ENCODE measurements at regions of chr22 and their contacts with region 1.

Region 1: GRCh38 chr22:25404928-25405816 is 159.3 kb upstream of the GRK3 start:
- DNase-seq: peak; percentile 73
- H3K4me3 Mint-ChIP-seq: peak overlapping the region; percentile 78
- H3K27ac Mint-ChIP-seq: peak overlapping the region; percentile 55
- H3K4me1 Mint-ChIP-seq: peaks cover 35% of the 10 kb centered on the region
- H3K27me3 Mint-ChIP-seq: peaks cover 10% of the 10 kb centered on the region
- CTCF ChIP-seq: no peak

Region 2: DNA sequence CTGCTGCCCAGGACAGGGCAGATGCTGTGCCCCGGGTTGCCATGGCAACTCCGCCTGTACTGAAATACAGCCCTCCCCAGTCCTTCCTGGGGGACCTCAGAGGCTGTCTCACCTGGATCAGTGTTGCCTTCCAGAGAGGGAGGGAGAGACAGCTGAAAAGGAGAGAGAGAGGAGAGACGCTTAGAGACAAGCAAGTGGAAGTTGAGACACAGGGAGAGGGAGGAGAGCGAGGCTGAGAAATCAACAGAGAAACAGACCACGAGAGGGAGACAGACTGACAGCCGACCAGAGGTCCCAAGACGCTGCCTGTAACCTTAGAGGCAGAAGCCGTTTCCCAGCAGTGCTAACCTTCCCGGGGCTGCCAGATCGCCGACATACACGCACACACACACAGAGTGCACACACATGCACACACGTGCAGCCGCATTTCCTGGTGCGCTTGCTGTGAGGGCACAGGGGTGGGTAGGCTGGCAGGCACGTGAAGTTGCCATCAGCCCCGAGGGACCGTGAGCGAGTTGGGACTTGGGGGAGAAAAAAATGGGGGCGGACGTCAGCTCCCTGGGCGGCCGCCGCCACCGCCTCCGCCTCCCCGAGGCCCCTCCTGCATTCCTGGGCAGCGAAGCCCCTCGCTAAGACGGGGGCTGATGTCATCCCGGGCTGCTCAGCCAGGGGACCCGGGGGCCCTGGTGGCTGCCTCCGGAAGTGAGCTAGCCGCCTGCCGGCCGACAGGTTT is 294.2 kb before region 1 on chr22:
- CTCF ChIA-PET with region 1: no interaction called
- intact Hi-C with region 1: no loop called
- DNase-seq: peak; percentile 91
- H3K4me3 Mint-ChIP-seq: peak overlapping the region; percentile 88
- H3K27ac Mint-ChIP-seq: peak overlapping the region; percentile 100
- H3K4me1 Mint-ChIP-seq: peaks cover 40% of the 10 kb centered on the region
- H3K27me3 Mint-ChIP-seq: no peaks in the 10 kb centered on the region
- CTCF ChIP-seq: peak; percentile 63

Region 3: GRCh38 chr22:25362215-25362882 is 42.8 kb before region 1 on chr22:
- CTCF ChIA-PET with region 1: no interaction called
- intact Hi-C with region 1: loop called (anchors 5 kb)
- DNase-seq: peak; percentile 84
- H3K4me3 Mint-ChIP-seq: no peak overlapping the region
- H3K27ac Mint-ChIP-seq: no peak overlapping the region
- H3K4me1 Mint-ChIP-seq: no peaks in the 10 kb centered on the region
- H3K27me3 Mint-ChIP-seq: no peaks in the 10 kb centered on the region
- CTCF ChIP-seq: peak; percentile 92

Region 4: DNA sequence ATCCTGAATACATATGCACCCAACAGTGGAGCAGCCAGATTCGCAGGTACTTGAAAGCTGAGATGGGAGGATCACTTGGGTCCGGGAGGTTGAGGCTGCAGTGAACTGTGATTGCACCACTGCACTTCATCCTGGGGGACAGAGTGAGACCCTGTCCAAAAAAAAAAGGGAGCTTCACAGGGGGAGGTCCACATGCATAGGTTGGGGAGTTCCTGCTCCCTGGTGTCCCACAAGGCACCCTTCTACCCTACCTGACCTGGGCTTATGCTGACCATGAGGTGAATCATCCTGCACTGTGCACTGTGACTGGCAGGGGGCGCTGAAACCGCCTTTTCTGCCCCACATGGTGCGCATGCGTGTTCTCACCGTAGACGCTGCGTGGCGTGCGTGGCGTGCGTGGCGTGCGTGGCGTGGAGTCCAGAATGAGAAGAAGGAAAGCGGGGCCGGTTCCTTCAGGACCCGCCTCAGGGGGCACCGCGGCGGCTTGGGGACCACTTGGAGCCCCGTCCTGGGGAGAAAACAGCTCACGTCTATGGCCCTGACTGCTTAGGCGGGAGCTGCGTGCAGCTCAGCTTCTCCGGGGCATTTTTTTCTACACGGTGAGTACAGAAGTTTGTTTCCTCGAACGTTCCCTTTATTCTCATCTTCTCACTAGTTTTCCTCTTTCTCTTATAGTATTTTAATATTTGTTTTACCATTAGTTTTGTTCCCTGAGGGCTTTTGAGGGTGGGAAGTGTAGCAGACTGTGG is 42.7 kb after region 1 on chr22:
- CTCF ChIA-PET with region 1: interaction called, 3 read pairs
- intact Hi-C with region 1: loop called (anchors 2 kb)
- DNase-seq: peak; percentile 90
- H3K4me3 Mint-ChIP-seq: peak overlapping the region; percentile 63
- H3K27ac Mint-ChIP-seq: peak overlapping the region; percentile 3
- H3K4me1 Mint-ChIP-seq: peaks cover 28% of the 10 kb centered on the region
- H3K27me3 Mint-ChIP-seq: no peaks in the 10 kb centered on the region
- CTCF ChIP-seq: peak; percentile 95

Region 5: GRCh38 chr22:25572708-25573171 is 167.6 kb after region 1 on chr22:
- CTCF ChIA-PET with region 1: no interaction called
- intact Hi-C with region 1: no loop called
- DNase-seq: no peak
- H3K4me3 Mint-ChIP-seq: no peak overlapping the region
- H3K27ac Mint-ChIP-seq: no peak overlapping the region
- H3K4me1 Mint-ChIP-seq: peaks cover 7% of the 10 kb centered on the region
- H3K27me3 Mint-ChIP-seq: no peaks in the 10 kb centered on the region
- CTCF ChIP-seq: no peak

Measured in Calu3 (cell line).